Adrenal gland (tissue), 19 donors: ENCODE measurements at regions of chr10 and their contacts with region 1.

Region 1: DNA sequence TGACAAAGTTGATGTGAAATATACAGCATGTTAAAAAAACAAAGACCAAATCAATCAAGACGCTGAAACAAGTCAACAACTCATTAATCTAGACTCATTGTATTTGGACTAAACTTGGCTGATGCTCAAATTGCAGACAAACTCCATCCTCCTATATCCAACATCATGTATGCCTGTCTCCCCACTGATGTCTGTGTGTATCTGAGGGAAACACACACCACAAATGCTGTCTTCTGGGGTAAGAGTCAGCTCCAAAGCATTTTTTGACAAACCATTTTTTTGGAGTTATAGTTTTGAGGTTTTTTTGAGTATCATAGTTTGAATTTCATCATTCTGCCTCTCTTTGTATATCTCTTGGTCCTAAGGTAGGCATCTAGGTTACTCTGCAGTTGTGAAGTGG is 1531.3 kb upstream of the LRRTM3 start:
- DNase-seq: no peak
- H3K4me3 ChIP-seq: no peak overlapping the region
- H3K27ac ChIP-seq: no peak overlapping the region
- H3K4me1 ChIP-seq: no peaks in the 10 kb centered on the region
- H3K27me3 ChIP-seq: no peaks in the 10 kb centered on the region
- CTCF ChIP-seq: no peak
- POLR2A ChIP-seq: no peak

Region 2: DNA sequence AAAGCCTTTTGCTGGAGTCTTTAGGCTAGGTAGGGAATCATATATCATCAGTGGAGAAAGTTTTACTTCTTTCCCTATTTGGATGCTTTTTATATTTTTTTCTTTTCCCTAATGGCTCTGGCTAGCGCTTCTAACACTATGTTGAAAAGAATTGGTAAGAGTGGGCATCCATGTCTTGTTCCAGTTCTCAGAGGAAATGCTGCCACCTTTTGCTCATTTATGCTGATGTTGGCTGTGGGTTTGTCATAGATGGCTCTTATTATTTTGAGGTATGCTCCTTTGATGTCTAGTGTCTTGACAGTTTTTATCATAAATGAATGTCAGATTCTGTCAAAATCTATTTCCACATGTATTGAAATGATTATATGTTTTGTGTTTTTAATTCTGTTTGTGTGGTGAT is 329.2 kb before region 1 on chr10:
- intact Hi-C with region 1: loop called in 1 of 2 experiments (anchors 5 kb)
- DNase-seq: no peak
- H3K4me3 ChIP-seq: no peak overlapping the region
- H3K27ac ChIP-seq: no peak overlapping the region
- H3K4me1 ChIP-seq: no peaks in the 10 kb centered on the region
- H3K27me3 ChIP-seq: no peaks in the 10 kb centered on the region
- CTCF ChIP-seq: no peak
- POLR2A ChIP-seq: no peak